Gastrocnemius medialis (tissue), 4 donors: ENCODE measurements at regions of chr5 and their contacts with region 1.

Region 1: DNA sequence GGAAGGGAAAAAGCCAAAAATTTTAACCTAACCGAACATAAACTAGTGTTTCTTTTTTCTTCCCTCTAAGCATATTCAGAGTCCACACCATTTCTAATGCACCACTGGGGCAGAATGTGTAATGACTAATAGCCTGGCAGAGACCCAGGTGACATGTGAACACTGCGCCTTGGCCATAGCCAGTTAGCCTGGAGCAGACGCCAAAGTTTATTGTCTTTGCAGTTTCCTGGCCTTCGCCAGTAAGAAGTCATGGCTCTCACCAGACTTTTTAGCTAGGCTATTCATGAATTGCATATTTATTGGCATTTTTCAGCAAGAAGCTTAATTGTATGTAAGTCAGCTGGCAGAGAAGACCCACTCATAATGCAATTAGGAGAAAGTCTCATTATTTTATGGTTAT is 182.8 kb upstream of the SLC27A6 start:
- DNase-seq: peak; percentile 55 to 62
- ATAC-seq: peak; percentile 91 to 93
- H3K4me3 ChIP-seq: no peak overlapping the region
- H3K27ac ChIP-seq: peak overlapping the region in 1 of 4 donors; percentile 44
- H3K4me1 ChIP-seq: no peaks in the 10 kb centered on the region
- H3K27me3 ChIP-seq: no peaks in the 10 kb centered on the region
- CTCF ChIP-seq: no peak
- POLR2A ChIP-seq: no peak

Region 2: GRCh38 chr5:128825826-128826225 is 43.4 kb after region 1 on chr5:
- in situ Hi-C with region 1: no loop called
- intact Hi-C with region 1: loop called (anchors 2 kb)
- DNase-seq: no peak
- ATAC-seq: peak in 1 of 2 donors; percentile 36
- H3K4me3 ChIP-seq: no peak overlapping the region
- H3K27ac ChIP-seq: no peak overlapping the region
- H3K4me1 ChIP-seq: no peaks in the 10 kb centered on the region
- H3K27me3 ChIP-seq: no peaks in the 10 kb centered on the region
- CTCF ChIP-seq: no peak
- POLR2A ChIP-seq: no peak